Heart right ventricle (tissue), 16 donors: ENCODE measurements at regions of chr13 and their contacts with region 1.

Region 1: DNA sequence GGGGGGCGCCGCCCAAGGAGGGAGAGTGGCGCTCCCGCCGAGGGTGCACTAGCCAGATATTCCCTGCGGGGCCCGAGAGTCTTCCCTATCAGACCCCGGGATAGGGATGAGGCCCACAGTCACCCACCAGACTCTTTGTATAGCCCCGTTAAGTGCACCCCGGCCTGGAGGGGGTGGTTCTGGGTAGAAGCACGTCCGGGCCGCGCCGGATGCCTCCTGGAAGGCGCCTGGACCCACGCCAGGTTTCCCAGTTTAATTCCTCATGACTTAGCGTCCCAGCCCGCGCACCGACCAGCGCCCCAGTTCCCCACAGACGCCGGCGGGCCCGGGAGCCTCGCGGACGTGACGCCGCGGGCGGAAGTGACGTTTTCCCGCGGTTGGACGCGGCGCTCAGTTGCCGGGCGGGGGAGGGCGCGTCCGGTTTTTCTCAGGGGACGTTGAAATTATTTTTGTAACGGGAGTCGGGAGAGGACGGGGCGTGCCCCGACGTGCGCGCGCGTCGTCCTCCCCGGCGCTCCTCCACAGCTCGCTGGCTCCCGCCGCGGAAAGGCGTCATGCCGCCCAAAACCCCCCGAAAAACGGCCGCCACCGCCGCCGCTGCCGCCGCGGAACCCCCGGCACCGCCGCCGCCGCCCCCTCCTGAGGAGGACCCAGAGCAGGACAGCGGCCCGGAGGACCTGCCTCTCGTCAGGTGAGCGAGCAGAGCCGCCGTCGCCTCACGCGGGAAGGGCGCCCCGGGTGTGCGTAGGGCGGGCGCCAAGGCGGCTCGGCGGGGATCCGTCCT is at the start of gene RB1:
- DNase-seq: peak; percentile 94
- ATAC-seq: peak; percentile 94 to 98 (median 97)
- H3K4me3 ChIP-seq: peak within 1 kb of the TSS; percentile 69 to 99 (median 90)
- H3K27ac ChIP-seq: peak within 1 kb of the TSS; percentile 97 to 100 (median 100)
- H3K4me1 ChIP-seq: peaks cover 0 to 44% (median 33%) of the 10 kb centered on the region in 9 donors
- H3K27me3 ChIP-seq: no peaks in the 10 kb centered on the region
- CTCF ChIP-seq: no peak
- total RNA-seq, gene RB1: 22.3 to 42.0 (median 26.8) TPM

Region 2: GRCh38 chr13:48037346-48038173 is 266.0 kb before region 1 on chr13 and contains the start of gene NUDT15:
- intact Hi-C with region 1: loop called in 1 of 10 experiments (anchors 5 kb)
- DNase-seq: peak; percentile 92 to 94
- ATAC-seq: peak; percentile 97 to 99 (median 99)
- H3K4me3 ChIP-seq: peak within 1 kb of the TSS; percentile 53 to 87 (median 66)
- H3K27ac ChIP-seq: peak within 1 kb of the TSS; percentile 91 to 98 (median 96)
- H3K4me1 ChIP-seq: peaks cover 4 to 26% (median 14%) of the 10 kb centered on the region in 9 donors
- H3K27me3 ChIP-seq: no peaks in the 10 kb centered on the region
- CTCF ChIP-seq: peak; percentile 86 to 99 (median 97)
- total RNA-seq, gene NUDT15: 9.6 to 13.7 (median 11.3) TPM

Region 3: GRCh38 chr13:48094781-48095502 is 208.6 kb before region 1 on chr13 and contains the start of gene MED4:
- intact Hi-C with region 1: loop called in 3 of 10 experiments (anchors 2 to 10 kb)
- DNase-seq: peak; percentile 96 to 98
- ATAC-seq: peak; percentile 97 to 99 (median 98)
- H3K4me3 ChIP-seq: peak within 1 kb of the TSS; percentile 61 to 100 (median 97)
- H3K27ac ChIP-seq: peak within 1 kb of the TSS; percentile 11 to 96 (median 91)
- H3K4me1 ChIP-seq: peaks cover 0 to 45% (median 35%) of the 10 kb centered on the region in 9 donors
- H3K27me3 ChIP-seq: no peaks in the 10 kb centered on the region
- CTCF ChIP-seq: peak; percentile 98 to 100 (median 99)
- total RNA-seq, gene MED4: 42.7 to 57.7 (median 48.7) TPM

Region 4: DNA sequence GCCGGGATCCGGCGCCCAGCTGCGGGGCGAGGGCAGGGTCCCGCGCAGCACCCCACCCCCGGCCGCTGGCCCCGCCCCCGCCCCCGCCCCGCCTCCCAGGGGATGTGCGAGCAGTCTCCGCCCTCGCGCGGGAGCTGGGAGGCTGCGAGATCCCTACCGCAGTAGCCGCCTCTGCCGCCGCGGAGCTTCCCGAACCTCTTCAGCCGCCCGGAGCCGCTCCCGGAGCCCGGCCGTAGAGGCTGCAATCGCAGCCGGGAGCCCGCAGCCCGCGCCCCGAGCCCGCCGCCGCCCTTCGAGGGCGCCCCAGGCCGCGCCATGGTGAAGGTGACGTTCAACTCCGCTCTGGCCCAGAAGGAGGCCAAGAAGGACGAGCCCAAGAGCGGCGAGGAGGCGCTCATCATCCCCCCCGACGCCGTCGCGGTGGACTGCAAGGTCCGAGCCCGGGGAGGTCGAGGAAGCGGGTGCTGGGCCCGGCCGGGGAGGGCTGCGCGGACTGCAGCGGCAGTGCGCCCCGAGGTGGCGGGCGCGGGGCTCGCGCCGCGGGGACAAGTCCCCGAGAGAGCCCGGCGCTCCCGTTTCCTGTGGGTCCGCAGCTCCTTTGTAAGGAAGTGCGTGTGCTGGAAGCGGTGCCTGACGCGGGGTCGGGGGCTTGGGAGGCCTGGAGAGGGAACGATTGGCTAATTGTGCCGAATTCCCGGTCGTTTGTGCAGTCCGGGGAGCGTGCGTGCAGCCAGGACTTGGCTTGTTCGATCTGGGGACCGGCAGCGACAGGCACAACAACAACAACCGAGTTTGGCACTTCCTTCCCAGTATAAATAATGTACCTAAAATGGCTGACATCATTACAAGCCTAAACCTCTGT is 70.3 kb before region 1 on chr13 and contains the start of gene ITM2B:
- intact Hi-C with region 1: loop called in 7 of 10 experiments (anchors 1 to 10 kb)
- DNase-seq: peak; percentile 80 to 86
- ATAC-seq: peak; percentile 85 to 96 (median 93)
- H3K4me3 ChIP-seq: peak within 1 kb of the TSS; percentile 86 to 100 (median 97)
- H3K27ac ChIP-seq: peak within 1 kb of the TSS; percentile 98 to 100 (median 100)
- H3K4me1 ChIP-seq: peaks cover 0 to 55% (median 44%) of the 10 kb centered on the region in 9 donors
- H3K27me3 ChIP-seq: no peaks in the 10 kb centered on the region
- CTCF ChIP-seq: peak in 8 of 9 donors; percentile 25 to 67 (median 53)
- total RNA-seq, gene ITM2B: 434 to 636 (median 511) TPM

Region 5: DNA sequence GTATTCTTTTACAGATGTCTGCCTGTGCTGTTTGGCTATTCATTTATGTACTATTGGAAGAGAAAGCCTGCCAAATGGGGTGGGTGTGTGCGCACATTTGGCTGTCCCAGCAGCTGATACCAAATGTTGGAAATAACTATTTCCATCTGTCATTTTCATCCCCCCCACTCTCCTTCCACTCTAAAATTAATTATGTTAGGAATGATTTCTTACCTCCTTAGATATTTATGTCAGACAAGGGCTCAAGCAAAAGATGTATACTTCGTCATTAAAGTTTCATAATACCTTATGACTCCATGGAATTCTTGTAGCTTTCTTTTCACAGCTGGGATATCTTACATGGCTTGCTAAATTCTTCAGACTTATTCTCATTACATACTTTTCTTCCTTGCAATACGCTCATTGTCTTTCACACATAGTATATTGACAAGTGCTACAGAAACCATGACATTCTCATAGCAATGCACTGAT is 51.9 kb before region 1 on chr13:
- intact Hi-C with region 1: loop called in 1 of 10 experiments (anchors 5 kb)
- DNase-seq: no peak
- ATAC-seq: peak in 6 of 8 donors; percentile 44 to 56 (median 51)
- H3K4me3 ChIP-seq: no peak overlapping the region
- H3K27ac ChIP-seq: peak overlapping the region in 8 of 10 donors; percentile 11 to 55 (median 30)
- H3K4me1 ChIP-seq: peaks cover 6 to 96% (median 84%) of the 10 kb centered on the region in 9 donors
- H3K27me3 ChIP-seq: no peaks in the 10 kb centered on the region
- CTCF ChIP-seq: no peak

Region 6: DNA sequence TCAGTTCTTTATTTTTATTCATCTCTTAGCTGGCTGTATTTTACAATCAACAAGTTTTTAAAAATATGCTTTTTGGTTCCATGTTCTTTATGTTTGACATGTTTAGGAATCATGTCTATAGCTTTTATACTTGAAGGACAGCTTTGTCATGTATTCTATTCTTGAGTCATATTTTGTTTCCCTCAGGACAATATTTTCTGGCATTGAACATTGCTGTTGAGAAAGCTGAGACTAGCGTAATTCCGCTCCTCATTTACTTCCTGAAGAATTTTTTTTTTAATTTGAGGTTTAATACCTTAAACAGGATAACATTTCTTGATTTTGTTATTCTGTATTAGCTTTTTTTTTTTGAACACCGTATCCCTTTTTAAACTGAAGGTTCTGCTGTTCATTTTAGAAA is 53.2 kb after region 1 on chr13:
- intact Hi-C with region 1: no loop called
- DNase-seq: no peak
- ATAC-seq: peak in 5 of 8 donors; percentile 57 to 76 (median 63)
- H3K4me3 ChIP-seq: no peak overlapping the region
- H3K27ac ChIP-seq: peak overlapping the region in 4 of 10 donors; percentile 28 to 64 (median 35)
- H3K4me1 ChIP-seq: peaks cover 0 to 17% (median 0%) of the 10 kb centered on the region in 9 donors
- H3K27me3 ChIP-seq: no peaks in the 10 kb centered on the region
- CTCF ChIP-seq: no peak